BJ (cell line): ENCODE measurements at regions of chr3 and their contacts with region 1.

Region 1: DNA sequence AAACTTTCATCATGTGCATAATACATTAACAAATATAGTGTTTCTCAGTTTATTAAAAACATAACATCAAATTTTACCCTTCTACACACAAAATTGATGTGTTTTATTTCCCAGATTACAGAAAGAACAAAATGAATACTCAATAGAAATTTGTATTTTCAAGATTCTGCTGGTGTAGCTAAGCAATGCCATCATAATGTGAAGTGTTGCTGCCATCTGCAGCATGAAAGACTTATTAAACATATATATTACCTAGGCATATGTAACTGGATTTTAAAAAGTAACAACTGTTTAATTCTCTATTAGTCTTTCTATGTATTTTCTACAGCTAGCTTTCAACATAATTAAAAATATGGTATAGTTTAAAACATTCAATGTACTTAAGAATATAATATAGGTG is 27.5 kb downstream of the PLSCR5 start:
- DNase-seq: no peak
- H3K4me3 ChIP-seq: no peak overlapping the region
- H3K27me3 ChIP-seq: no peaks in the 10 kb centered on the region
- CTCF ChIP-seq: peak; percentile 26; the same call in 1 of the 2 replicates

Region 2: DNA sequence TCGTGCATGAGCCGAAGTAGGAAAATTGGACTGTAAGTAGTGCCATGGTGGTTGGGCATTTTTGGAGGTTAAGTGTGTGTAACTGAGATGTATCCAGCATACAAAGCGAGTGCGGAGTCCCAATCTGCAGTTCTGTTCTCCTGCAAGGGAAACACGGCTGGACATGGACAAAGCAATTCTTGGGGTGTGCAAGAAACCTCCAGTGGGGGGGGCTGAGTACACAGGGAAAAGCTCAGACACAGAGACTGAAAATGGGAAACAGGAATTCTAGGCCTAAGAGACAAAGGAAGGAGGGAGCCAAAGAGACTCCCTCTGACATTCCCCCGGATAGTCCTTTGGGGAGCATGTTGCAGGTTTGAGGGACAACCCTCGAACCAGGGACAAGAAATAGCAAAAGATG is 243.5 kb before region 1 on chr3:
- CTCF ChIA-PET with region 1: interaction called, 12 read pairs
- POLR2A ChIA-PET with region 1: no interaction called
- DNase-seq: no peak
- H3K4me3 ChIP-seq: no peak overlapping the region
- H3K27me3 ChIP-seq: no peaks in the 10 kb centered on the region
- CTCF ChIP-seq: peak; percentile 43

Region 3: GRCh38 chr3:146655333-146655996 is 77.8 kb after region 1 on chr3:
- CTCF ChIA-PET with region 1: no interaction called
- POLR2A ChIA-PET with region 1: no interaction called
- DNase-seq: no peak
- H3K4me3 ChIP-seq: no peak overlapping the region
- H3K27me3 ChIP-seq: no peaks in the 10 kb centered on the region
- CTCF ChIP-seq: no peak